Activated T-helper 1 cell treated with anti-CD3 and anti-CD28 coated beads, Interleukin-12 subunit alpha, Interleukin-12 subunit beta, Interleukin-2, Interleukin-4 antibody, amounts not matched to agents 30 ng/mL and 10 ng/mL and 1 ng/mL, durations not matched to agents 14 hours and 24 hours and 36 hours (primary cell): ENCODE measurements at regions of chr7 and their contacts with region 1.

Region 1: GRCh38 chr7:24819916-24820689 is 62.8 kb upstream of the GSDME start:
- DNase-seq: peak; percentile 75
- H3K4me3 Mint-ChIP-seq: peak overlapping the region; percentile 73
- H3K27ac Mint-ChIP-seq: peak overlapping the region; percentile 98
- H3K4me1 Mint-ChIP-seq: peaks cover 54% of the 10 kb centered on the region
- H3K27me3 Mint-ChIP-seq: peaks cover 2% of the 10 kb centered on the region

Region 2: GRCh38 chr7:24475166-24475961 is 344.7 kb before region 1 on chr7:
- intact Hi-C with region 1: no loop called
- DNase-seq: no peak
- H3K4me3 Mint-ChIP-seq: no peak overlapping the region
- H3K27ac Mint-ChIP-seq: no peak overlapping the region
- H3K4me1 Mint-ChIP-seq: no peaks in the 10 kb centered on the region
- H3K27me3 Mint-ChIP-seq: peaks cover 2% of the 10 kb centered on the region

Region 3: GRCh38 chr7:24869572-24869971 is 49.5 kb after region 1 on chr7:
- intact Hi-C with region 1: loop called (anchors 1 kb)
- DNase-seq: no peak
- H3K4me3 Mint-ChIP-seq: no peak overlapping the region
- H3K27ac Mint-ChIP-seq: peak overlapping the region; percentile 13
- H3K4me1 Mint-ChIP-seq: peaks cover 49% of the 10 kb centered on the region
- H3K27me3 Mint-ChIP-seq: no peaks in the 10 kb centered on the region

Region 4: GRCh38 chr7:24907311-24907886 is 87.3 kb after region 1 on chr7:
- intact Hi-C with region 1: loop called (anchors 1 kb)
- DNase-seq: peak; percentile 38
- H3K4me3 Mint-ChIP-seq: no peak overlapping the region
- H3K27ac Mint-ChIP-seq: no peak overlapping the region
- H3K4me1 Mint-ChIP-seq: peaks cover 48% of the 10 kb centered on the region
- H3K27me3 Mint-ChIP-seq: no peaks in the 10 kb centered on the region

Region 5: DNA sequence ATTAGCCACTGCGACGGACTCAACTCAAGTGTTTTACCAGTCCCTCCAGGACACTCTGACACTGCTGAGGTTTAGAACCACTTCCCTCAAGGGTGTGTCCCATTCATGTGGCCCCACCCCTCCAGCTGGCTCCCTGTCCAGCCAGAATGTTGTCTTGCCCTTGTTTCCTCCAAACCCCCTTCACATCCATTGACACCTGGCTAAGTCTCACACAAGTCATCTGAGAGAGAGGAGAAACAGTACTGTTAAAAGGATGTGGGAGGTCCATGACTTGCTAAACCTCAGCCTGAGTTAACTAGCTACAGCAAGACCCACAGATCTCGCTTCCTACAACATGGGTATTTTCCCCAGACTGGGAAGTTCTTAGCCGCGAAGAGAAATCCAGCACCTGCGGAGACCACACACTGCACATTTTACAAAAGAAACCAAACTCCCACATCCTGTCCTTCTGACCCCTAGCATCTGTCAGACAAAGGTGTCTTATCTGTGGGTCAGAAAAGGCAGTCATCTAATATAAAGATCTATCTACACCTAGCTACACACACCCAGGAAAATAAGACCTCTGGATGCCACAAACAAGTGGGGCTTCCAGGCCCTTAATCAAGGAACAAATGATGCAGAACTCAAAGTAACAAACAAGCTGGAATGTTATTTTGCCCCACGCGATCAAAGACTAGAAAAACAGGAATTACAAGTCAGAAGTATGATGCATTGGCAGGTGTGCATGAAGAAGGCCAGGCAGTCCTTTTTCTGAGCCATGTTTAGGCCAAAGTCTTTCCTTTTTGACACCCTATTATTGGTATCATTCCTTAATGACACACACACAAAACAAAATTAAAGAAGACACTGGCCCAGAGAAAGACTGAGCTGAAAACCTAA is 146.0 kb after region 1 on chr7:
- intact Hi-C with region 1: loop called (anchors 1 kb)
- DNase-seq: peak; percentile 52
- H3K4me3 Mint-ChIP-seq: peak overlapping the region; percentile 59
- H3K27ac Mint-ChIP-seq: peak overlapping the region; percentile 89
- H3K4me1 Mint-ChIP-seq: peaks cover 80% of the 10 kb centered on the region
- H3K27me3 Mint-ChIP-seq: no peaks in the 10 kb centered on the region

Region 6: DNA sequence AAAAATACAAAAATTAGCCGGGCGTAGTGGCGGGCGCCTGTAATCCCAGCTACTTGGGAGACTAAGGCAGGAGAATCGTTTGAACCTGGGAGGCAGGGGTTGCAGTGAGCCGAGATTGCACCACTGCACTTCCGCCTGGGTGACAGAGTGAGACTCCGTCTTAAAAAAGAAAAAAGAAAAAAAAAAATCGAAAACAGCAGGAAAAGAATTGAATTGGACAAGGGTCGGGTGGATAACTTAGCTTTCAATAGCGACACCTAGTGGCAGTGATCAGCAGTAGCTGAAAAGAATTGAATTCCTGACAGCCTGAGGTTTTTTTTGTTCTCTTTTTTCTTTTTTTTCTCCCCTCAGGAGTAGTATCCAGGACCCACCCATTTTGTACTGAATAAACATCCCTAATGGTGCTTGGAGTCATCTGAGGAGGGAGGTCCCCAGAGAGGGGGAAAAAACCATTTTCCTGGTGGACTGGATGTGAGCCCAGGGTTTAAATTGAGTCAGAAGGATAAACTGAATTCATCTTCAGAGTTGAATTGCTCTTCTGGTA is 249.9 kb after region 1 on chr7:
- intact Hi-C with region 1: loop called (anchors 1 kb)
- DNase-seq: peak; percentile 16
- H3K4me3 Mint-ChIP-seq: no peak overlapping the region
- H3K27ac Mint-ChIP-seq: no peak overlapping the region
- H3K4me1 Mint-ChIP-seq: peaks cover 27% of the 10 kb centered on the region
- H3K27me3 Mint-ChIP-seq: peaks cover 2% of the 10 kb centered on the region

Region 7: GRCh38 chr7:25098096-25099046 is 278.3 kb after region 1 on chr7:
- intact Hi-C with region 1: loop called (anchors 1 kb)
- DNase-seq: peak; percentile 48
- H3K4me3 Mint-ChIP-seq: no peak overlapping the region
- H3K27ac Mint-ChIP-seq: no peak overlapping the region
- H3K4me1 Mint-ChIP-seq: peaks cover 14% of the 10 kb centered on the region
- H3K27me3 Mint-ChIP-seq: peaks cover 17% of the 10 kb centered on the region